GM13977 (cell line): ENCODE measurements at regions of chr14 and their contacts with region 1.

Region 1: DNA sequence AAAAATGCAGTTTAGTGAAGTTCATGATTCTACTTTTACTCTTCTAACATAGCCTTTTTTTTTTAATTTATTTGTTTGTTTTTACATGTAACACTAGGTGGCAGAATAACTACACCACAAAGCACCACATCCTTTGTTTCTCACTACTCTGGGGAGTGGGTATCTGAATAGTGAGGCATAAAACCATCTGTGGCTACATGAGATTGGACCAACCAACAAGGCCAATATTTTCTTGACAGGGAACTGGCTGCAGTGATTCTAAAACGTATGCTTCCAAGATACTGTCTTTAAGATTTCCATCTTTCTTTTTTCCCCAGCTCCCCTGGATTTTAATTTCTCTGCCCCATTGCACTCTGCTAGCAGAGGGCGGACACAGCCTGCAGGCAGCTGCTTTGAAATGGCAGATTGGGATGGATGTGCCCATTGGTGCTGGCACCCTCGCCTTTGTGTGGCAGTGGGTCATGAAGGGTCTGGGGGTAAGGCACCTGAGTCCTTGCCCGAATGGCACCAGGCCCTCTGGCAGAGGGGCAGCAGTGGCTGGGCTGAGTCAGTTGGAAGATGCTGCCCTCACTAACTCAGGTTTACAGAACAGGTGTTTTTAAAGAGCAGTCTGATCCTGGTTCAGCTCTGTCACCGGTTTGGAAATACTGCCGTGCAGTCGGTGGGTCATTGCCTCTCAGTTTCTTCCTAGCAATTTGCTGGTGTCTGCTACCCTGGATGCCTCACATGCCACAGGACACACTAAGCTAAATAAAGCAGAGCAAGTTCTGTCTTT is 429.1 kb downstream of the RAD51B start:
- DNase-seq: peak; percentile 53
- CTCF ChIP-seq: peak; percentile 33

Region 2: GRCh38 chr14:67951529-67952135 is 297.0 kb before region 1 on chr14:
- in situ Hi-C with region 1: loop called (anchors 10 kb)
- DNase-seq: no peak
- CTCF ChIP-seq: no peak

Region 3: DNA sequence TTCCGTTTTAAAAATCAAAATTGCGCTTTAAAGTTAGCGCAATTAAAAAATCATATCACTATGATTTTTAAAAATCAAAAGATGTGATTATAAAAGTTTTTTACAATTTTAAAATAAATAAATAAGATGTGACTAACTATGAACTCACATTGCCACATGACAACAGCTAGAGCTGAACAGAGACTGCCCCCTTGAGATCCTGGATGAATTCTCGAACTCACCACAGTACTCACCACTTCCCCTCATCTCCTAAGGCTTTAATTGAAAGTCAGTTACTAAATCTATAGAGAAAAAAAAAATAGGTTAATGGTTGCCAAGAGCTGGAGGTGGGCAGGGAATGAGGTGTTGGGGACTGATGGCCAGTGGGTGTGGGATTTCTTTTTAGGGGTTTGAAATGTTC is 160.0 kb after region 1 on chr14:
- in situ Hi-C with region 1: loop called (anchors 10 kb)
- DNase-seq: no peak
- CTCF ChIP-seq: peak; percentile 41

Region 4: DNA sequence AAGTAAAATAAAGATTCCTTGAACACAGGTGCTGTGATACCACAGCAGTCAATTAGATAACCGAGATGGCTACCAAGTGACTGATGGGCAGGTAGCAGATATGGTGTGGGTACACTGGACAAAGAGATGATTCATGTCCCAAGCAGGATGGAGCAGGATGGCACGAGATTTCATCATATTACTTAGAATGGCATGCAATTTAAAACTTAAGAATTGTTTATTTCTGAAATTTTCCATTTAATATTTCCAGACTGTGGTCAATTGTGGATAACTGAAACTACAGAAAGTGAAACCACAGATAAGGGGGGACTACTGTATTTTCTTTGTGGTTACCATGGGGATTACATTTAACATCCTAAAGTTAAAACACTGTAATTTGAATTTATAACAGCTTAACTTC is 551.7 kb after region 1 on chr14:
- in situ Hi-C with region 1: loop called (anchors 5 kb)
- DNase-seq: no peak
- CTCF ChIP-seq: no peak